ENCODE measurements at regions of chrX and their contacts with region 1.

Region 1: GRCh38 chrX:15493118-15493962 is at the start of gene PIR:
- DNase-seq: peak; percentile 74 to 87
- ATAC-seq: peak; percentile 94
- H3K4me3 ChIP-seq: peak within 1 kb of the TSS; percentile 62 to 73 (median 66)
- H3K27ac ChIP-seq: peak within 1 kb of the TSS; percentile 83 to 93 (median 86)
- H3K4me1 ChIP-seq: no peaks in the 10 kb centered on the region
- H3K27me3 ChIP-seq: no peaks in the 10 kb centered on the region
- CTCF ChIP-seq: peak in 2 of 5 experiments; percentile 45 to 48
- POLR2A ChIP-seq: peak; percentile 69 to 72
- total RNA-seq, gene PIR: 9.4 to 20.2 (median 14.2) TPM

Region 2: GRCh38 chrX:15299941-15300851 is 193.1 kb before region 1 on chrX:
- in situ Hi-C with region 1: no loop called
- intact Hi-C with region 1: loop called (anchors 1 kb)
- DNase-seq: no peak
- ATAC-seq: no peak
- H3K4me3 ChIP-seq: no peak overlapping the region
- H3K27ac ChIP-seq: peak overlapping the region; percentile 83 to 92 (median 91)
- H3K4me1 ChIP-seq: peaks cover 22 to 23% of the 10 kb centered on the region in 2 donors
- H3K27me3 ChIP-seq: no peaks in the 10 kb centered on the region
- CTCF ChIP-seq: peak; percentile 21 to 58 (median 42)
- POLR2A ChIP-seq: no peak

Region 3: GRCh38 chrX:15335135-15336022 is 158.0 kb before region 1 on chrX and contains the start of gene PIGA:
- in situ Hi-C with region 1: loop called in 1 of 4 experiments (anchors 25 kb)
- intact Hi-C with region 1: loop called (anchors 10 kb)
- DNase-seq: peak; percentile 93 to 96
- ATAC-seq: peak; percentile 95 to 96
- H3K4me3 ChIP-seq: peak within 1 kb of the TSS; percentile 63 to 78 (median 72)
- H3K27ac ChIP-seq: peak within 1 kb of the TSS; percentile 86 to 91 (median 89)
- H3K4me1 ChIP-seq: peaks cover 0 to 13% of the 10 kb centered on the region in 2 donors
- H3K27me3 ChIP-seq: no peaks in the 10 kb centered on the region
- CTCF ChIP-seq: no peak
- POLR2A ChIP-seq: peak; percentile 93 to 94
- total RNA-seq, gene PIGA: 1.5 to 5.9 (median 3.1) TPM

Region 4: DNA sequence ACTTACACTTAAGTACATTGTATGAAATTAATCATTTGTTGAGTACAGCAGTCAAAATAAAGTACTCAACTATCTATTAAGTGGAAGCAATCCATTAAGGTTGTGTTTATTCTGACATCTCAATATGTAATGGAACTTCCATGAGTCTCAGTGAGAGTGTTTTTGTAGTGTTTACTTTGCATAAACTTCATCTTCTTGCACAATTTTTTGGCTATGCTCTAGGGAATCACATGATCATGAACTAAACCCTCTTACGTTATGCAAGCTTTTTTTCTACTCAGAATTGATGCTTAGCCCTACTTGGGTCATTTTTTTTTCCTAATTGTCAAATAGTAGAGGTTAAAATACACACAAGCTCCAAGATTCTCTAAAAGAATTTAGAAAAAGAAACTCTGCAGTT is 136.9 kb before region 1 on chrX:
- in situ Hi-C with region 1: no loop called
- intact Hi-C with region 1: no loop called
- DNase-seq: no peak
- ATAC-seq: peak; percentile 63 to 65
- H3K4me3 ChIP-seq: no peak overlapping the region
- H3K27ac ChIP-seq: peak overlapping the region; percentile 3 to 48 (median 34)
- H3K4me1 ChIP-seq: no peaks in the 10 kb centered on the region
- H3K27me3 ChIP-seq: no peaks in the 10 kb centered on the region
- CTCF ChIP-seq: no peak
- POLR2A ChIP-seq: no peak

Region 5: DNA sequence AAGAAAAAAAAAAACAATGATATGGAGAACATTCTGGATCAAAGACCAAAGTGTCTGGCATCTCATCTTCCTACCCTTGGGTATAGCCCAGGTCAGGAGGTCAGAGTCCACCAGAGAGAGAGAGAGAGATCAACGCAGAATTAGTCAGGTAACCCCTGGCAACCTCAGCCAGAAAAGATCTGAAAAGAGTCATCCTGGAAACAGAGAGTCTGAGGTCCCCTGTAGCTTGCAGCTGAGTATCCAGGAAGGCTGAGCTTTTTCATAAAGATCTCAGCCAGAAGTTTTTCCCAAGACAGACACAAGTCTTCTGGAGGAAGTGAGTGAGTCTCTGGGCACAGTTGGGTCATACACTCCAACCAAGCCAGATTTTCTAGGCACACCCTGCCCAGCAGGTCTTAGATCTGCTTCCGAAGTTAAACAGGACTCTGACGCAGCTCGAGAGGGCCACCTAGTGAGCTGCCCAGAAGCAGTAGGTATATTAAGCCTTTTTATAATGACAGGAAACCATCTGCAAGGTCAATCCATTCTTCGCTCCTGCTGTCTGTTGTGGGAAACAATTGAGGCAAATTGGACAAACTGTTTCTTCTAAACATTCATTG is 71.7 kb after region 1 on chrX:
- in situ Hi-C with region 1: no loop called
- intact Hi-C with region 1: loop called (anchors 1 kb)
- DNase-seq: peak; percentile 24 to 59
- ATAC-seq: peak; percentile 85 to 96
- H3K4me3 ChIP-seq: no peak overlapping the region
- H3K27ac ChIP-seq: no peak overlapping the region
- H3K4me1 ChIP-seq: no peaks in the 10 kb centered on the region
- H3K27me3 ChIP-seq: peaks cover 0 to 4% (median 0%) of the 10 kb centered on the region in 3 donors
- CTCF ChIP-seq: peak in 4 of 5 experiments; percentile 26 to 61 (median 46)
- POLR2A ChIP-seq: no peak

Region 6: GRCh38 chrX:15645258-15645657 is 151.9 kb after region 1 on chrX:
- in situ Hi-C with region 1: loop called in 1 of 4 experiments (anchors 25 kb)
- intact Hi-C with region 1: loop called (anchors 10 kb)
- DNase-seq: no peak
- ATAC-seq: no peak
- H3K4me3 ChIP-seq: no peak overlapping the region
- H3K27ac ChIP-seq: no peak overlapping the region
- H3K4me1 ChIP-seq: no peaks in the 10 kb centered on the region
- H3K27me3 ChIP-seq: peaks cover 0 to 15% (median 10%) of the 10 kb centered on the region in 3 donors
- CTCF ChIP-seq: no peak
- POLR2A ChIP-seq: no peak

Region 7: GRCh38 chrX:16870095-16870860 is 1376.9 kb after region 1 on chrX and contains the start of gene RBBP7:
- in situ Hi-C with region 1: no loop called
- intact Hi-C with region 1: loop called (anchors 10 kb)
- DNase-seq: peak; percentile 85 to 89
- ATAC-seq: peak; percentile 83
- H3K4me3 ChIP-seq: peak within 1 kb of the TSS; percentile 64 to 84 (median 70)
- H3K27ac ChIP-seq: peak within 1 kb of the TSS; percentile 90 to 98 (median 95)
- H3K4me1 ChIP-seq: peaks cover 11 to 17% of the 10 kb centered on the region in 2 donors
- H3K27me3 ChIP-seq: peaks cover 0 to 8% (median 6%) of the 10 kb centered on the region in 3 donors
- CTCF ChIP-seq: no peak
- POLR2A ChIP-seq: peak; percentile 88 to 93
- total RNA-seq, gene RBBP7: 95.0 to 325 (median 151) TPM